Right ventricle myocardium inferior (tissue), 1 donor: ENCODE measurements at regions of chr10 and their contacts with region 1.

Region 1: DNA sequence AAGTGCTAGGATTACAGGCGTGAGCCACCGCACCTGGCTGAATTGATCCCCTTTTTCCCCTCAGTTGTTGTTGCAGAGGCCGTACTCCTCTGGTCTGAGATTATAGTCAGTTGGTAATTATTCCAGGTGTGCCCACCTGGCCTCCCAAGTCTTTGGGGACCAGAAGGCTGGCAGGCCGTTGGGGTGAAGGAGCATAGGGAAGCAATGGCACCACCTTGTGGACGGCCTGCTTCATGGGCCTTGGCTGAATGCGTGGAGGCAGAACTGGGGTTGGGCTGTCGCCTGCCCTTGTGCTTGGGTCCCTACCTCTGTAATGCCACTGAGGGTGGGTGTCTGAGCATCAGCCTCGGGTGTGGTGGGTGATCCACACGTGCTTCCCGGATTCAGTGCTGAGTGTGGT is 125.7 kb downstream of the RGS10 start:
- DNase-seq: peak; percentile 82
- ATAC-seq: no peak

Region 2: GRCh38 chr10:119370111-119370741 is 46.6 kb before region 1 on chr10:
- intact Hi-C with region 1: loop called (anchors 2 kb)
- DNase-seq: peak; percentile 80
- ATAC-seq: peak; percentile 56